ENCODE measurements at regions of chr2 and their contacts with region 1.

Region 1: GRCh38 chr2:108583903-108584520 is 49.7 kb downstream of the LIMS1 start:
- DNase-seq: peak; percentile 88
- ATAC-seq: peak; percentile 78
- H3K4me3 ChIP-seq: no peak overlapping the region
- H3K27ac ChIP-seq: no peak overlapping the region
- H3K4me1 ChIP-seq: peaks cover 49% of the 10 kb centered on the region
- H3K27me3 ChIP-seq: no peaks in the 10 kb centered on the region
- CTCF ChIP-seq: peak; percentile 83

Region 2: GRCh38 chr2:108215794-108216211 is 368.2 kb before region 1 on chr2:
- CTCF ChIA-PET with region 1: no interaction called
- POLR2A ChIA-PET with region 1: no interaction called
- intact Hi-C with region 1: loop called (anchors 1 kb)
- DNase-seq: peak; percentile 79
- ATAC-seq: peak; percentile 90
- H3K4me3 ChIP-seq: peak overlapping the region; percentile 56
- H3K27ac ChIP-seq: peak overlapping the region; percentile 65
- H3K4me1 ChIP-seq: peaks cover 19% of the 10 kb centered on the region
- H3K27me3 ChIP-seq: no peaks in the 10 kb centered on the region
- CTCF ChIP-seq: peak; percentile 78

Region 3: DNA sequence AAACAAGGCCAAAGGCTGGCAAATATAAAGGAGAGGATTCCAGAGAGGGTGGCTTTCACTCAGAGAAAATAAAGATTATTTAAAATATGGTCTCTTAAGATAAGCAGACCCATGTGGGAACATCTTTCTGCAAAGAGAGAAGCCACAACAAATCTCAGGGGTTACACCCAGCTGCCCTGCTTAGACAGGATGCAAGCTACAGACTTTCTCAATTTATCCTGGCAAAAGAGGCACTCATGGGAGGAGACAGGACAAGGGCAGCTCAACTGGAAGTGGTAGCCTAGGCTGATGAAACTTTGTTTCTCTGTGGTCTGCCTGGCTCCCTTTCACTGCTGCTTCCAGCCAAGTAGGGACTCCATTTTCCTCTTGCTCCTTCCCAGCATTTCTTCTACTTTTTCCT is 232.1 kb before region 1 on chr2:
- CTCF ChIA-PET with region 1: no interaction called
- POLR2A ChIA-PET with region 1: no interaction called
- intact Hi-C with region 1: loop called (anchors 1 kb)
- DNase-seq: no peak
- ATAC-seq: no peak
- H3K4me3 ChIP-seq: no peak overlapping the region
- H3K27ac ChIP-seq: no peak overlapping the region
- H3K4me1 ChIP-seq: no peaks in the 10 kb centered on the region
- H3K27me3 ChIP-seq: no peaks in the 10 kb centered on the region
- CTCF ChIP-seq: no peak

Region 4: DNA sequence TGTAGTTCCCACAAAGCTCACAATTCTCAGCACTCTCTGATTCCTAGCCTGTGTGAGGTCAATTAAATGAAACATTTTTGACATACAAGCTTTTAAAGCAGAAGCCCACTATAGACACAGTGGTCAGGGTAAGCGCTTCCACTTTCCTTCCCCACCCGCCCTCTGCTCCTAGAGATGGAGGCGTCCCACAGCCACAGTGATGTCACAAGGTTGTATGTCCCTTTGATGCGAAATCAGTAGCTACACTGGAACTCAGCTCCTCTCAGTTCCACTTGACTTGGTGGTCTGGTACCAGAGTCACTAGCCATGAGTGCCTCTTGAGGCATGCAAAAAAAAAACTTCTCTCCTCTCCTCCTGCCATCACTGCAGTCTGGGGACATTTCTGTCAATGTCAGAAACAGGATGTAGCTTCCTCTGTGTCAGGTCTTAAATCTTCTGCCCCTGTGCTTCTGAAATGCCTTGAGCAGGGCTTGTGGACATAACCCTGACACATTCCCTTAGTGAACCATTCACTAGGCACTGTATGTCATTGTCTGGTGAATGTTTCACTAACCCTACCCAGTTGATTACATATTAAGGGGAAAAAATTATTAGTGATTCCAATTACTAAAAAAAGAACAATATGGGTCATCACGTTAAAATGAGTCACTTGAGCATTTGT is 198.5 kb before region 1 on chr2:
- CTCF ChIA-PET with region 1: no interaction called
- POLR2A ChIA-PET with region 1: no interaction called
- intact Hi-C with region 1: no loop called
- DNase-seq: no peak
- ATAC-seq: no peak
- H3K4me3 ChIP-seq: no peak overlapping the region
- H3K27ac ChIP-seq: no peak overlapping the region
- H3K4me1 ChIP-seq: 0 out of 2 replicates have a peak, but pooled peaks cover 4% of the 10 kb centered on the region
- H3K27me3 ChIP-seq: no peaks in the 10 kb centered on the region
- CTCF ChIP-seq: no peak

Region 5: DNA sequence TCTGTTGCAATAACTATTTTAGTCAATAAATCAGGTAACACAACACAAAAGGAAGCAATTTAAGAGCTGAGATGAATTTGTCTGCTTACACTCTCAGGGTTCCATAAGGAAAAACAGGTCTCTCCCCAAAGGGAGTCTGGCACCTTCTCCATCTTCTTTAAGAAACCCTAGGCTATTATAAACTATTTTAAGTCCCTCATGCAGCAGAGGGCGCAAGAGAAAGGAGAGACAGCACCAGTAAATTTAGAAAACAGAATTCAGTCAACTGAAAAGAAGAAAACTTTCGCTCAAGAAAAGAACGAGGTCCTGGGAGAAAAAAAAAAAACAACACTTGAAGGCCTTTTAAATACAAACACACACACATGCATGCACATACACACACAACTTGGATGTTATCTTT is 187.2 kb before region 1 on chr2:
- CTCF ChIA-PET with region 1: interaction called, 4 read pairs
- POLR2A ChIA-PET with region 1: no interaction called
- intact Hi-C with region 1: loop called (anchors 2 kb)
- DNase-seq: peak; percentile 67
- ATAC-seq: peak; percentile 22; the same call in 1 of the 2 replicates
- H3K4me3 ChIP-seq: no peak overlapping the region
- H3K27ac ChIP-seq: no peak overlapping the region
- H3K4me1 ChIP-seq: no peaks in the 10 kb centered on the region
- H3K27me3 ChIP-seq: no peaks in the 10 kb centered on the region
- CTCF ChIP-seq: peak; percentile 74

Region 6: DNA sequence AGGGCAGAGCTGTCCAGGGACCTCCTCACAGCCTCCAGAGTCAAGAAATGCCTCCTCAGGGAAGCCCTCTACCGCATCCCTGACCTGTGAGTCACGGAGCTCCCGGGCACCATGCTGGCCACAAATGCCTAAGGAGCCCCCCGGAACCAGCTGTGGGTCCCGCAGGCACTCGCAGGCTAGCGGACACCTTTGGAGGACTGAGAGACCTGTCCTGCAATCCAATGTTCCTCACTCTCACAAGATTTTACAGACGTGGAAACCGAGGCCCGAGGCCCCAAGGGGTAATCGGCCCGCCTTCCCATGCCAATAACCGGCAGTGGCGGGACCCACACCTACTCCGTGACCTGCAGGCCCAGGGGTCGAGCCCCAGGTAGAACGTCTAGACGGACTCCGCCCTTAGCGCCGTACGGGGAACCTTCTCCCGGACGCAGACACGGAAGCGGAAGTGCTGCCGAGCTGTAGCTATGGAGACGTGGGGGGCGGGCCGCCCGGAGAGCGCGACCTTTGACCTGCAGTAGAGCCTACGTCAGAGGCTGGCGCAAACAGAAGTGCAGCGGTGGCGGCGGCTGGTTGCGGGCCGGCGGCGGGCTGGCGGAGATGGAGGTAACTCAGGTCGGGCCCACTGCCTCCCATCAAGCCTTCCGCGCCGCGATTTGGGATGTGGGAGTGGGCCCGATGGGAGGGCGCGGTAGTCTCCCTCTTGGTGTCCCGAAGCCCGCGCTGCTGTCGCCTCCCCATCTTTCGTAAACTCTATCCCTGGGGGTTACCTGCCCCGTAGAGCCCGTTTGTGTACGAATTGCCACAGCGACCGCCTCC is 135.1 kb before region 1 on chr2 and contains the start of gene GCC2:
- CTCF ChIA-PET with region 1: interaction called, 4 read pairs
- POLR2A ChIA-PET with region 1: no interaction called
- intact Hi-C with region 1: loop called (anchors 1 kb)
- DNase-seq: peak; percentile 94
- ATAC-seq: peak; percentile 97
- H3K4me3 ChIP-seq: peak within 1 kb of the TSS; percentile 97
- H3K27ac ChIP-seq: peak within 1 kb of the TSS; percentile 65
- H3K4me1 ChIP-seq: peaks cover 10% of the 10 kb centered on the region; the same call in 1 of the 2 replicates
- H3K27me3 ChIP-seq: no peaks in the 10 kb centered on the region
- CTCF ChIP-seq: no peak
- total RNA-seq, gene GCC2: 7.3 and 10.1 TPM in 2 replicates

Region 7: GRCh38 chr2:108491848-108492247 is 92.2 kb before region 1 on chr2:
- CTCF ChIA-PET with region 1: no interaction called
- POLR2A ChIA-PET with region 1: no interaction called
- intact Hi-C with region 1: loop called (anchors 2 kb)
- DNase-seq: no peak
- ATAC-seq: no peak
- H3K4me3 ChIP-seq: no peak overlapping the region
- H3K27ac ChIP-seq: no peak overlapping the region
- H3K4me1 ChIP-seq: no peaks in the 10 kb centered on the region
- H3K27me3 ChIP-seq: no peaks in the 10 kb centered on the region
- CTCF ChIP-seq: no peak

Region 8: GRCh38 chr2:108621087-108621559 is 37.1 kb after region 1 on chr2:
- CTCF ChIA-PET with region 1: no interaction called
- POLR2A ChIA-PET with region 1: interaction called, 19 read pairs
- intact Hi-C with region 1: no loop called
- DNase-seq: peak; percentile 73
- ATAC-seq: peak; percentile 83
- H3K4me3 ChIP-seq: no peak overlapping the region
- H3K27ac ChIP-seq: peak overlapping the region; percentile 42
- H3K4me1 ChIP-seq: peaks cover 56% of the 10 kb centered on the region
- H3K27me3 ChIP-seq: no peaks in the 10 kb centered on the region
- CTCF ChIP-seq: no peak

Measured in PC-3 (cell line).